GM12878 (cell line): ENCODE measurements at regions of chr2 and their contacts with region 1.

Region 1: DNA sequence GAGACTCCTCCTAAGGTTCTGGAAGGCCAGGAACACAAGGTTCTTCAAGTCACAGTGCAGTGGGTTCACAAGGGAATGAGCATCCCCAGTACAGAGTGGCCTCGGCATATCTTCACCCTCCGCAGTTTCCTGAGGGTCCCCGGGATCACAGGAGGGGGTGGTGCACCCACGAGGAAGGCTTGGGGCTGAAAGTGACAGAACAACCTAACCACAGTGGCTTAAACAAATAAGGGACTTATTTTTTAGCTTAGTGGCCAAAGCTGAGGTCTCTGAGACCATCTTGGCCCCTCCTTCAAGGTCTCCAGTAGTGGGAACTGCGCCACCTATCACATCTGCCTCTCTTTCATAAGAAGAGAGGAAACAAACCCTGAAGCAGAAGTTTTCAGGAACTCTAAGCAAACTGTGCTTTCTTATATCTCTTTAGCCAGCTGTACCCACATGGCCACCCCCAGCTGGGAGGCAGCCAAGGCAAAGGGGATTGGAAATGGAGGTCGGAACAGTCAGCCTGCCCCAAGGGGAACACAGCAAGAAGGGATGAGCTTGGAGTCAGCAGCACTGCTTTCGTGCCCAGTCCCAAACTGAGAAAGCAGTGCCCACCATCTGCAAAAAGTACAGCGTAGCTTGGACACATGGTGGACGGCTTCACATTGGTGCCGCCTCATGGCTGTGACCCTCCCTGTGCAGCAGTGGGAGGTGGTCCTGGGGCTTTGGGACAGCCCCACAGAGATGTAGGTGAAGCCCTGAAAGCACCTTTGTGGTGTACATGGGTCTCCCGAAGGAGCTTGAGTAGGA is 260.0 kb upstream of the ID2 start:
- DNase-seq: peak; percentile 71
- ATAC-seq: peak; percentile 85
- H3K4me3 ChIP-seq: no peak overlapping the region
- H3K27ac ChIP-seq: peak overlapping the region; percentile 46
- H3K4me1 ChIP-seq: peaks cover 16% of the 10 kb centered on the region
- H3K27me3 ChIP-seq: no peaks in the 10 kb centered on the region
- CTCF ChIP-seq: peak; percentile 26 to 44 (median 29); a peak in 5 of 6 replicates
- EP300 ChIP-seq: peak; percentile 56 to 80; a peak in 3 of 4 replicates
- POLR2A ChIP-seq: no peak
- RAD21 ChIP-seq: peak; percentile 49

Region 2: GRCh38 chr2:8234757-8235374 is 187.0 kb before region 1 on chr2:
- CTCF ChIA-PET with region 1: interaction called, 5 read pairs
- POLR2A ChIA-PET with region 1: no interaction called
- RAD21 ChIA-PET with region 1: no interaction called
- SMC1A ChIA-PET with region 1: interaction called, 10 read pairs
- in situ Hi-C with region 1: no loop called
- intact Hi-C with region 1: no loop called
- DNase-seq: peak; percentile 90
- ATAC-seq: peak; percentile 88
- H3K4me3 ChIP-seq: peak overlapping the region; percentile 26; the same call in 1 of the 2 replicates
- H3K27ac ChIP-seq: peak overlapping the region; percentile 41
- H3K4me1 ChIP-seq: peaks cover 39% of the 10 kb centered on the region
- H3K27me3 ChIP-seq: no peaks in the 10 kb centered on the region
- CTCF ChIP-seq: no peak
- EP300 ChIP-seq: peak; percentile 78 to 84
- POLR2A ChIP-seq: no peak
- RAD21 ChIP-seq: no peak

Region 3: DNA sequence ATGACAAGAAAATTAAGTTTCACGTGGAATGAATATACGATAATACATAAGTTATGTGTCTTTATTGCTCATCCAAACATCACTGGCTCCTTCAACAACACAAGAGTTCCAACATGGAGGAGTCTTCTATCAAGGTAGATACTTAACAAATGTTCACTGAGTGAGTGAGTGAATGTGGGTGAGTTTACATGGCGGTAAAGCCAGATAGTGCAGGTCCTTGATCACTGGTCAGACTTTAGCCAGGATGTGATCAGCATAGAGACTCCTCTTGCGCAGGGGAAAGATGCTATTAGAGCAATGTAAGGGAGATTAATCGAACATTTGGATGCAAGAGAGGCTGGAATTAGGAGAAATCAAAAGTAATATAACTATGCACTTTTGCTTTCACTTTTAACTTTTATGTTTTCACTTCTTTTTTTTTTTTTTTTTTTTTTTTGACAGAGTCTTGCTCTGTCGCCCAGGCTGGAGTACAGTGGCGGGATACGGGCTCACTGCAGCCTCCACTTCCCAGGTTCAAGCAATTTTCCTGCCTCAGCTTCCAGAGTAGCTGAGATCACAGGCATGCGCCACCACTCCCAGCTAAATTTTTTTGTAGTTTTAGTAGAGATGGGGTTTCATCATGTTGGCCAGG is 11.0 kb after region 1 on chr2:
- CTCF ChIA-PET with region 1: interaction called, 20 read pairs
- POLR2A ChIA-PET with region 1: interaction called, 5 read pairs
- RAD21 ChIA-PET with region 1: interaction called, 6 read pairs
- SMC1A ChIA-PET with region 1: interaction called, 10 read pairs
- in situ Hi-C with region 1: no loop called
- intact Hi-C with region 1: no loop called
- DNase-seq: no peak
- ATAC-seq: peak; percentile 72
- H3K4me3 ChIP-seq: no peak overlapping the region
- H3K27ac ChIP-seq: peak overlapping the region; percentile 24; the same call in 1 of the 2 replicates
- H3K4me1 ChIP-seq: peaks cover 13% of the 10 kb centered on the region
- H3K27me3 ChIP-seq: no peaks in the 10 kb centered on the region
- CTCF ChIP-seq: no peak
- EP300 ChIP-seq: no peak
- POLR2A ChIP-seq: no peak
- RAD21 ChIP-seq: no peak

Region 4: DNA sequence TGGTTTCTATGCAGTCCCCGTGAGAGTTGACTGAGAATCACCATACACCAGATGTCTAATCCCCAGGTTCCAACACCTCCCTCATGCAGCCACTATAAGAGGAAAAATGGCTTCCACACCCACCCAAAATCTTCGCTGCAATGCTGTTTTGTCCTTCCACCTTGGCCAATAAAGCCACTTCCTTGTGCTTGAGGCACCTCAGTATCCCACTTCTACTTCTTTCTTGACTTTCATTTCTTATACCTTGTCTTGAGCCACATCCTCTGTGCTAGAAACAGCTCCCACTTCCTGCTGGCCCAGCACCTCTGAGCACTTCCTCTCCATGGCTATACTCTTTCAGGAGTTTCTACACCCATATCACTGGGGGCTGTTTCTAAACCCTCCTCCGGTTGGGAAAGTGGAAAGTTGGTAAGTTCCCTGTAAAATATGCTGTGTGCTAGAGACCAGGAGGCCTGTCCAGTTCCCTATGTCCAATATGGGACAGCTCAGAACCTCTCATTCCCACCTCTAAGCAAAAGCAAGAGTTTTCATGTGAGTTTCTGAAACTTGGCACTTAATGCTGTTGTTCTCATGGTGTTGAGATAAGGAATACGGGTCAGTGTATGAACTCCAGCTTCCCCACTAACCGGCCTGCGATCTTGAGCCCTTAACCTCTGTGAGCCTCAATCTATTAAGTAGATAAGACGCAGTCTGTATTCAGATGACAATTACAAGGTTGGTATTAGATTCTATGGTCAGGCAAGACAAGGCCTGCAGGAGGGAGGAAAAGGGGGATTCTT is 50.9 kb after region 1 on chr2:
- CTCF ChIA-PET with region 1: interaction called, 15 read pairs
- POLR2A ChIA-PET with region 1: interaction called, 28 read pairs
- RAD21 ChIA-PET with region 1: interaction called, 40 read pairs
- SMC1A ChIA-PET with region 1: interaction called, 145 read pairs
- in situ Hi-C with region 1: no loop called
- intact Hi-C with region 1: loop called (anchors 2 kb)
- DNase-seq: no peak
- ATAC-seq: peak; percentile 20
- H3K4me3 ChIP-seq: no peak overlapping the region
- H3K27ac ChIP-seq: peak overlapping the region; percentile 33
- H3K4me1 ChIP-seq: peaks cover 59% of the 10 kb centered on the region
- H3K27me3 ChIP-seq: no peaks in the 10 kb centered on the region
- CTCF ChIP-seq: no peak
- EP300 ChIP-seq: peak; percentile 10 to 24; a peak in 1 of 4 replicates
- POLR2A ChIP-seq: no peak
- RAD21 ChIP-seq: no peak

Region 5: GRCh38 chr2:8525582-8526402 is 103.9 kb after region 1 on chr2:
- CTCF ChIA-PET with region 1: interaction called, 6 read pairs
- POLR2A ChIA-PET with region 1: interaction called, 4 read pairs
- RAD21 ChIA-PET with region 1: interaction called, 34 read pairs
- SMC1A ChIA-PET with region 1: interaction called, 27 read pairs
- in situ Hi-C with region 1: no loop called
- intact Hi-C with region 1: no loop called
- DNase-seq: peak; percentile 90
- ATAC-seq: peak; percentile 82
- H3K4me3 ChIP-seq: 0 out of 2 replicates have a peak overlapping the region, but pooled peaks have one; percentile 9
- H3K27ac ChIP-seq: peak overlapping the region; percentile 74
- H3K4me1 ChIP-seq: peaks cover 64% of the 10 kb centered on the region
- H3K27me3 ChIP-seq: no peaks in the 10 kb centered on the region
- CTCF ChIP-seq: peak; percentile 54 to 72 (median 58)
- EP300 ChIP-seq: peak in 1 of 2 experiments; percentile 80; a peak in 3 of 4 replicates
- POLR2A ChIP-seq: no peak
- RAD21 ChIP-seq: peak; percentile 88